ENCODE measurements at regions of chr7 and their contacts with region 1.

Region 1: DNA sequence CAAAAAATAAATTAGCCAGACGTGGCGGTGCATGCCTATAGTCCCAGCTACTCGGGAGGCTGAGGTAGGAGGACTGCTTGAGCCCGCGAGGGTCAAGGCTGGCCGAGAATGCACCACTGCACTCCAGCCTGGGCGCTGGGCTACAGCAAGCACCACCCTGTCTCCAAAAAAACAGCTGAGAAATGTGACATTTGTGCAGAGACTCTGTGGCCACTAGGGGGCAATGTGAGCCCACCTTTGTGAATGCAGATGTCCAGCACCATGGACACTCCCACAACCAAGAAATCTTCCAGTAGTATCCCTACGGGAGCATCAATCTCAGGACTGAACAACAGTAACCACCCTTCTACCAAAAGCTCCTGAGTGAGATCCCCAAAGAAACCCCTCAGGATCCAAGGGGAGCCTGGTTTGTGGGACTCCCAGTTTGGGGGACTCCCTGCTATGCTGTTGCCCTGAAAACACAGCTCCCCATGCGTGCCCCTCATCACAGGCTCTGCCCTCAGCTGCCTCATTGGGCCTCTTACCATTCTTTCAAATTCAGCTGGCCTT is 6.2 kb upstream of the AHCYL2 start:
- DNase-seq: peak; percentile 90
- ATAC-seq: peak; percentile 91
- H3K4me3 Mint-ChIP-seq: no peak overlapping the region
- H3K27ac Mint-ChIP-seq: no peak overlapping the region
- H3K4me1 Mint-ChIP-seq: peaks cover 7% of the 10 kb centered on the region
- H3K27me3 Mint-ChIP-seq: peaks cover 4% of the 10 kb centered on the region
- CTCF ChIP-seq: peak; percentile 94

Region 2: GRCh38 chr7:129009437-129009836 is 209.2 kb before region 1 on chr7:
- CTCF ChIA-PET with region 1: no interaction called
- POLR2A ChIA-PET with region 1: no interaction called
- intact Hi-C with region 1: no loop called
- DNase-seq: peak; percentile 13
- ATAC-seq: peak; percentile 15
- H3K4me3 Mint-ChIP-seq: no peak overlapping the region
- H3K27ac Mint-ChIP-seq: peak overlapping the region; percentile 91
- H3K4me1 Mint-ChIP-seq: peaks cover 43% of the 10 kb centered on the region
- H3K27me3 Mint-ChIP-seq: no peaks in the 10 kb centered on the region
- CTCF ChIP-seq: no peak

Region 3: DNA sequence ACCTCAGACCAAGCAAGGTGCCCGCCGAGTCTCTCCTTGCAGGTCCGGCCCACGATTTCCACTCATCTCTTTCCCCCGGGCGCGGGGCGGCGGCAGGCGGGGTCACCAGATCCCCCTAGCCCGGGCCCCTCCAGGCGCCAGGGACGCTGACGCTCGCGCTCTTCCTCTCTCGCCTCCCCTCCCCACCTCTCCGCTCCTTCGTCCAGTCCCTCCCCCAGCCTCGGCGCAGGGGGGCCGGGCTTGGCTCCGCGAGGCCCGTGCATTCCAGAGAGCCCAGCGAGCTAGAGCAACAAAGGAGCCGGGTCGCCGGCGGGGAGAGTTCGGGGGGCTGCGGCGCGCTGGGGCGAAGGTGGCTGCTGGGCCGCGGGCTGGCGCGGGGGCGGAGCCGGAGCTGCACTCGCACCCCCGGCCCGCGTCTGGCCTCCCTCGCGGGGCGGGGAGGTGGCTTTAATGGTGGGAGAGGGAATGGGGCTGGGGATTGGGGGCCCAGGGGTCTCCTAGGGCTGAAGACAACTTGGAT is 30.2 kb before region 1 on chr7 and contains the start of gene SMO:
- CTCF ChIA-PET with region 1: interaction called, 18 read pairs
- POLR2A ChIA-PET with region 1: no interaction called
- intact Hi-C with region 1: no loop called
- DNase-seq: peak; percentile 19
- ATAC-seq: peak; percentile 70
- H3K4me3 Mint-ChIP-seq: peak within 1 kb of the TSS; percentile 62
- H3K27ac Mint-ChIP-seq: no peak within 1 kb of the TSS
- H3K4me1 Mint-ChIP-seq: peaks cover 5% of the 10 kb centered on the region
- H3K27me3 Mint-ChIP-seq: peaks cover 50% of the 10 kb centered on the region
- CTCF ChIP-seq: no peak
- total RNA-seq, gene SMO: 0.81 to 1.7 TPM

Region 4: GRCh38 chr7:129240119-129240815 is 21.7 kb after region 1 on chr7:
- CTCF ChIA-PET with region 1: interaction called, 17 read pairs
- POLR2A ChIA-PET with region 1: no interaction called
- intact Hi-C with region 1: no loop called
- DNase-seq: no peak
- ATAC-seq: no peak
- H3K4me3 Mint-ChIP-seq: no peak overlapping the region
- H3K27ac Mint-ChIP-seq: no peak overlapping the region
- H3K4me1 Mint-ChIP-seq: peaks cover 5% of the 10 kb centered on the region
- H3K27me3 Mint-ChIP-seq: no peaks in the 10 kb centered on the region
- CTCF ChIP-seq: no peak

Region 5: GRCh38 chr7:129271500-129272355 is 53.1 kb after region 1 on chr7:
- CTCF ChIA-PET with region 1: interaction called, 320 read pairs
- POLR2A ChIA-PET with region 1: interaction called, 4 read pairs
- intact Hi-C with region 1: loop called (anchors 1 kb)
- DNase-seq: peak; percentile 80
- ATAC-seq: peak; percentile 100
- H3K4me3 Mint-ChIP-seq: peak overlapping the region; percentile 64
- H3K27ac Mint-ChIP-seq: peak overlapping the region; percentile 76
- H3K4me1 Mint-ChIP-seq: peaks cover 14% of the 10 kb centered on the region
- H3K27me3 Mint-ChIP-seq: no peaks in the 10 kb centered on the region
- CTCF ChIP-seq: peak; percentile 81

Region 6: GRCh38 chr7:129298268-129298893 is 79.8 kb after region 1 on chr7:
- CTCF ChIA-PET with region 1: interaction called, 101 read pairs
- POLR2A ChIA-PET with region 1: interaction called, 3 read pairs
- intact Hi-C with region 1: loop called (anchors 1 kb)
- DNase-seq: peak; percentile 79
- ATAC-seq: no peak
- H3K4me3 Mint-ChIP-seq: no peak overlapping the region
- H3K27ac Mint-ChIP-seq: no peak overlapping the region
- H3K4me1 Mint-ChIP-seq: no peaks in the 10 kb centered on the region
- H3K27me3 Mint-ChIP-seq: no peaks in the 10 kb centered on the region
- CTCF ChIP-seq: peak; percentile 82

Region 7: GRCh38 chr7:129367700-129368388 is 149.3 kb after region 1 on chr7:
- CTCF ChIA-PET with region 1: interaction called, 17 read pairs
- POLR2A ChIA-PET with region 1: no interaction called
- intact Hi-C with region 1: no loop called
- DNase-seq: peak; percentile 88
- ATAC-seq: peak; percentile 84
- H3K4me3 Mint-ChIP-seq: peak overlapping the region; percentile 22
- H3K27ac Mint-ChIP-seq: peak overlapping the region; percentile 52
- H3K4me1 Mint-ChIP-seq: peaks cover 23% of the 10 kb centered on the region
- H3K27me3 Mint-ChIP-seq: no peaks in the 10 kb centered on the region
- CTCF ChIP-seq: peak; percentile 87

Measured in activated CD8-positive, alpha-beta T cell treated with anti-CD3 and anti-CD28 coated beads for 36 hours (primary cell).